ENCODE measurements at regions of chr10 and their contacts with region 1.

Region 1: GRCh38 chr10:101840741-101841453 is 2.7 kb downstream of the KCNIP2 start:
- DNase-seq: peak; percentile 89
- ATAC-seq: peak; percentile 68
- H3K4me3 Mint-ChIP-seq: peak overlapping the region; percentile 73
- H3K27ac Mint-ChIP-seq: no peak overlapping the region
- H3K4me1 Mint-ChIP-seq: peaks cover 44% of the 10 kb centered on the region
- H3K27me3 Mint-ChIP-seq: peaks cover 9% of the 10 kb centered on the region

Region 2: GRCh38 chr10:101228153-101228973 is 612.5 kb before region 1 on chr10:
- CTCF ChIA-PET with region 1: no interaction called
- POLR2A ChIA-PET with region 1: no interaction called
- intact Hi-C with region 1: no loop called
- DNase-seq: no peak
- ATAC-seq: no peak
- H3K4me3 Mint-ChIP-seq: no peak overlapping the region
- H3K27ac Mint-ChIP-seq: no peak overlapping the region
- H3K4me1 Mint-ChIP-seq: peaks cover 35% of the 10 kb centered on the region
- H3K27me3 Mint-ChIP-seq: peaks cover 70% of the 10 kb centered on the region

Region 3: GRCh38 chr10:101818119-101818871 is 22.6 kb before region 1 on chr10 and contains the start of gene OGA:
- CTCF ChIA-PET with region 1: interaction called, 16 read pairs
- POLR2A ChIA-PET with region 1: interaction called, 13 read pairs
- intact Hi-C with region 1: no loop called
- DNase-seq: peak; percentile 99
- ATAC-seq: peak; percentile 89
- H3K4me3 Mint-ChIP-seq: peak within 1 kb of the TSS; percentile 89
- H3K27ac Mint-ChIP-seq: peak within 1 kb of the TSS; percentile 83
- H3K4me1 Mint-ChIP-seq: peaks cover 40% of the 10 kb centered on the region
- H3K27me3 Mint-ChIP-seq: no peaks in the 10 kb centered on the region
- total RNA-seq, gene OGA: 113 to 124 TPM

Region 4: DNA sequence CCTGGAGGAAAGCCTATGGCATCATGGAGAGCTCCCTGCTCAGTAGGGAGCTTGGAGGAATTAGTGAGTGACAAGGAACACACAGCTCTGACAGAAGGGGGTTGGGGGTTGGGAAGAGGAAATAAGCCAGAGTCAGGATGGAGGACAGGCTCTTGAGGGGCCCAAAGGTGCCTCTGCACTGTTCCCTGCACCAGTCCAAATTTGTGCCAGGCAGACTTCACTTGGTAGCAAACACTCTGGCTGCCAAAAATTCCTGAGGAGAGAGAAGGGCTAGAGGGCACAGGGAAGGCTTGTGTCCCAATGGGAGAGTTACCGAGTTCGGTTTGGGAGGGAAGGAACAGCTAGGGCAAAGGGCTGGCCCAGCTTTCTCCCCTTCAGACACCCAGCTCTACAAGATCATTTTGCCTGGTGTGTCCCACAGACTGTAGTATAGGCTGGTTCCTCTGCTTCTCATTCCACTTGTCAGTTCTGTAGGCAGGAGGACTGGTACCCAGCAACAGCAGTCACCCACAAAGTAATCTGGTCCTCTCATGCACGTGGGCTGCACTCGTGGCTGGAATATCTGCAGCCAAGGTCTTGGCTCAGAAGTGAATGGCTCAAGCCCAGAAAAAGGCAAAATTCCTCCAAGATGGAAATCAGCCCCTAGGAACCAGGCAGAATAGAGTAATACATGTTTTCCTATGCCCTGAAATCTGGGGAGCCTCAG is 10.7 kb after region 1 on chr10:
- CTCF ChIA-PET with region 1: interaction called, 18 read pairs
- POLR2A ChIA-PET with region 1: interaction called, 3 read pairs
- intact Hi-C with region 1: no loop called
- DNase-seq: no peak
- ATAC-seq: no peak
- H3K4me3 Mint-ChIP-seq: no peak overlapping the region
- H3K27ac Mint-ChIP-seq: no peak overlapping the region
- H3K4me1 Mint-ChIP-seq: no peaks in the 10 kb centered on the region
- H3K27me3 Mint-ChIP-seq: no peaks in the 10 kb centered on the region

Region 5: DNA sequence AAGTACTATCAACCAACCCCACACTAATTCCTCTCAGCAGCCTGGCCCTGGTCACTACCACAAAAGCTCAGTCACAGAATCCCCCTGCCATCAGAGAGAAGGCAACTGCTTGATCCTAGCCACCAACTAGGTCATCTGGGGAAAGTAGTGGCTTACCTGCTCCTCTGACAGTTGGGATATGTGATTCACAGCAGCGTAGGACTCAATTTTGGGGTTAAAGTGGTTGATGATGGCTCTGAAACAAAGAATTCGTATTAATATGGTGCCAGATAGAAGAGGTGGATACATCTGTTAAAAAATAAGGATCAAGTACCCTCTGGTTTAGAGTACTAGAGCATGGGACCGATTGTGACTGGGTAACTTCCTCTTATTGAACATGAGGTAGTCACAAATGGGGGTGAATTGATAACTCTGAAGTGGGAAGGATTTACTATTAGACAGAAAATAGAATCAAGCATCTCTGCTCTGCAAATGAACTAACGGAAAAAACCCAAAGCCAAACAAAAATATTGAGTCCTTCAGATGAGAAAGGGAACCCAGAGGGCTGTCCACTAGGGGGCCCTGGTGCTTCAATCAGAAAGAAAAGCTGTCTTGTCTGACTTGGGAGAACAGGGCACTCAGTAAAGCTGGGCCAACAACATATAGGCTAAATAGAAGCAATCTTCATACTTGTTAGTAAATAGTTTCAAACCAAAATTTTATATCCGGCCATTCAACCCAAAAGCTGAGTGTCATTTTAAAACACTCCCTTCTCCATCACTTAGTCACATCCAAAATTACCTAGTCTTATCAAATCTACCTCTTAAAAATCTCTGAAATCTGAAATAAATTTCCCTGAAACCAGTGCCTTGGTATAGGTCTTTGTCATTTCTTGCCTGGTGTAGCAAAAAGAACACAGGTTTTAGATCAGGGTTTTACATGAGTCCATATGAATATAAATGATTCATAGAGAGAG is 48.6 kb after region 1 on chr10:
- CTCF ChIA-PET with region 1: interaction called, 10 read pairs
- POLR2A ChIA-PET with region 1: no interaction called
- intact Hi-C with region 1: loop called in 1 of 2 experiments (anchors 1 kb)
- DNase-seq: peak; percentile 89
- ATAC-seq: peak; percentile 80
- H3K4me3 Mint-ChIP-seq: no peak overlapping the region
- H3K27ac Mint-ChIP-seq: no peak overlapping the region
- H3K4me1 Mint-ChIP-seq: peaks cover 4% of the 10 kb centered on the region
- H3K27me3 Mint-ChIP-seq: no peaks in the 10 kb centered on the region

Region 6: GRCh38 chr10:102001435-102002068 is 160.7 kb after region 1 on chr10:
- CTCF ChIA-PET with region 1: interaction called, 145 read pairs
- POLR2A ChIA-PET with region 1: no interaction called
- intact Hi-C with region 1: no loop called
- DNase-seq: no peak
- ATAC-seq: peak; percentile 73
- H3K4me3 Mint-ChIP-seq: no peak overlapping the region
- H3K27ac Mint-ChIP-seq: peak overlapping the region; percentile 72
- H3K4me1 Mint-ChIP-seq: peaks cover 17% of the 10 kb centered on the region
- H3K27me3 Mint-ChIP-seq: no peaks in the 10 kb centered on the region

Region 7: GRCh38 chr10:102038410-102038809 is 197.5 kb after region 1 on chr10:
- CTCF ChIA-PET with region 1: interaction called, 4 read pairs
- POLR2A ChIA-PET with region 1: interaction called, 10 read pairs
- intact Hi-C with region 1: no loop called
- DNase-seq: no peak
- ATAC-seq: no peak
- H3K4me3 Mint-ChIP-seq: no peak overlapping the region
- H3K27ac Mint-ChIP-seq: no peak overlapping the region
- H3K4me1 Mint-ChIP-seq: peaks cover 5% of the 10 kb centered on the region
- H3K27me3 Mint-ChIP-seq: no peaks in the 10 kb centered on the region

Region 8: DNA sequence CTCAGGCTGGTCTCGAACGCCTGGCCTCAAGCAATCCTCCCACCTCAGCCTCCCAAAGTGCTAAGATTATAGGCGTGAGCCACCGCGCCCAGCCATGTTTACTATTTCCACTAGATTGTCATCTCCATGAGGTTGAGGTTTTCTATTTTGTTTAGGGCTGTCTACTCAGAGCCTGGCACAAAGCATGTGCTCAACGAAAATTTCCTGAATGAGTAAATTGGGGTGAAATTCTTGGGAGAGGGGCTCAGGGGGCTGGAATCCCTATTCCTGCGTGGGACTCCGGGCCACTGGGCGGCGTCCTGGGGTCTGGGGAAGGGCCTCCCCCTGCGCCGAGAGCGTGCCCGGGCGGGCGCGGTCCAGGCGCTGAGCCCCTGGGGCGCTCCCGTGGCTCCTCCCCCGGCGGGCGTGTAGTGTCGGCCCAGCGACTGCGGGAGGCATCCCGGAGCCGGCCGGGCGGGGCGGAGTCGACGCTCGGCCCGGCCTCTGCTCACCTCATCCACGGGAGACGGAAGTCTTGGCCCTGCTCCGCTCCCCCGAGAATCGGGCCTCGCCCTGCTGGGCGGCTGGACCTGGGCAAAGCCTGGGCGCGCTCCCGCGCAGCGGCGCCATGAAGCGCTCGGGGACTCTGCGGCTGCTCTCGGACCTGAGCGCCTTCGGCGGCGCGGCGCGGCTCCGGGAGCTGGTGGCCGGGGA is 224.1 kb after region 1 on chr10 and contains the start of gene HPS6:
- CTCF ChIA-PET with region 1: interaction called, 16 read pairs
- POLR2A ChIA-PET with region 1: interaction called, 4 read pairs
- intact Hi-C with region 1: loop called in 1 of 2 experiments (anchors 2 kb)
- DNase-seq: peak; percentile 94
- ATAC-seq: peak; percentile 99
- H3K4me3 Mint-ChIP-seq: peak within 1 kb of the TSS; percentile 79
- H3K27ac Mint-ChIP-seq: peak within 1 kb of the TSS; percentile 88
- H3K4me1 Mint-ChIP-seq: peaks cover 22% of the 10 kb centered on the region
- H3K27me3 Mint-ChIP-seq: no peaks in the 10 kb centered on the region
- total RNA-seq, gene HPS6: 12.9 to 18.9 TPM

Region 9: DNA sequence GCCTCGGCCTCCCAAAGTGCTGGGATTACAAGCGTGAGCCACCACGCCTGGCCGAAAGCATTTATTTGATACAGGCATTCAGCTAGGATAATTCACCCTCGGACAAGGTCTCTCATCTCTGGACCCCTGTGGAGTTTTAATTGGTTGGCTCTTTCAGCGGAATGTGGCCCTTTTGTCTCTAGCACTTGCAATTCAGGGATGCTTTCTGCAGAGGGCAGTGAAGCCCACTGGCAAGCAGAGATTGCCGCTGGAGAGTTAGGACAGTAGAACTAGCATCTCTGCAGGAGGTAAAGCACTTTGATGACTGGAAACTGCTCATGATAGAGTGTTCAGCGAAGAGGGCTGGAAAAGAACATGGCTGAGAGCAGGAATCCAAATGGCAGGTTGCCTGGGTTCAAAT is 724.9 kb after region 1 on chr10:
- CTCF ChIA-PET with region 1: no interaction called
- POLR2A ChIA-PET with region 1: no interaction called
- intact Hi-C with region 1: no loop called
- DNase-seq: no peak
- ATAC-seq: no peak
- H3K4me3 Mint-ChIP-seq: no peak overlapping the region
- H3K27ac Mint-ChIP-seq: no peak overlapping the region
- H3K4me1 Mint-ChIP-seq: peaks cover 2% of the 10 kb centered on the region
- H3K27me3 Mint-ChIP-seq: no peaks in the 10 kb centered on the region

Measured in activated CD4-positive, alpha-beta T cell treated with anti-CD3 and anti-CD28 coated beads for 36 hours (primary cell).